Tibial artery (tissue), 4 donors: ENCODE measurements at regions of chr7 and their contacts with region 1.

Region 1: GRCh38 chr7:22822486-22823141 is at the start of gene TOMM7:
- DNase-seq: peak; percentile 83 to 92
- H3K4me3 ChIP-seq: peak within 1 kb of the TSS; percentile 79 to 88
- H3K27ac ChIP-seq: peak within 1 kb of the TSS; percentile 80 to 86
- H3K4me1 ChIP-seq: peaks cover 0 to 36% (median 15%) of the 10 kb centered on the region in 4 donors
- H3K27me3 ChIP-seq: no peaks in the 10 kb centered on the region
- CTCF ChIP-seq: peak; percentile 39 to 63

Region 2: GRCh38 chr7:21869785-21870402 is 952.7 kb before region 1 on chr7:
- intact Hi-C with region 1: no loop called
- DNase-seq: no peak
- H3K4me3 ChIP-seq: no peak overlapping the region
- H3K27ac ChIP-seq: no peak overlapping the region
- H3K4me1 ChIP-seq: no peaks in the 10 kb centered on the region
- H3K27me3 ChIP-seq: no peaks in the 10 kb centered on the region
- CTCF ChIP-seq: no peak

Region 3: DNA sequence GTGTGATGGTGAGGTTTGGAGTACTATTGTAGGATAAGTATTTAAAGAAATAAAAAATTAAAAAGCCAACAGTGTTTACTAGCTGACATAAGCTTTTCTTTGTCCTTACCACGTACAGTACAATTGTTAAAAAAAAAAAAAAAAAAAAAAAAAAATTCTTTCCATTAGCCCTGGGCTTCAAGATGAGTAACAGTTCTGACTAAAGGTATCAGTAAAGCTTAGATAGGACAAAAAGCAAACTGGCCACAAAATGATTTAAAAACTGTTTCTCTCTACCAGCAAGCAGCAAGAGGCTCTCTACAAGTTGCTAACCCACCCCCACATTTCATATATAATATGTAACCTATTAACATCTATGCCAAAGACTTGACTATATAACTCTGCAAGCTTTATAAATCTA is 173.9 kb after region 1 on chr7:
- intact Hi-C with region 1: no loop called
- DNase-seq: no peak
- H3K4me3 ChIP-seq: no peak overlapping the region
- H3K27ac ChIP-seq: no peak overlapping the region
- H3K4me1 ChIP-seq: peaks cover 0 to 29% (median 9%) of the 10 kb centered on the region in 4 donors
- H3K27me3 ChIP-seq: no peaks in the 10 kb centered on the region
- CTCF ChIP-seq: no peak

Region 4: GRCh38 chr7:23013715-23014649 is 191.4 kb after region 1 on chr7 and contains the start of gene HYCC1:
- intact Hi-C with region 1: loop called (anchors 2 kb)
- DNase-seq: peak; percentile 99 to 100
- H3K4me3 ChIP-seq: peak within 1 kb of the TSS; percentile 87 to 88
- H3K27ac ChIP-seq: peak within 1 kb of the TSS; percentile 86 to 89
- H3K4me1 ChIP-seq: peaks cover 0 to 61% (median 14%) of the 10 kb centered on the region in 4 donors
- H3K27me3 ChIP-seq: no peaks in the 10 kb centered on the region
- CTCF ChIP-seq: peak; percentile 74 to 81

Region 5: GRCh38 chr7:23055582-23056178 is 233.1 kb after region 1 on chr7:
- intact Hi-C with region 1: loop called (anchors 5 kb)
- DNase-seq: peak in 1 of 2 donors; percentile 50
- H3K4me3 ChIP-seq: no peak overlapping the region
- H3K27ac ChIP-seq: no peak overlapping the region
- H3K4me1 ChIP-seq: no peaks in the 10 kb centered on the region
- H3K27me3 ChIP-seq: no peaks in the 10 kb centered on the region
- CTCF ChIP-seq: peak; percentile 89 to 92

Region 6: GRCh38 chr7:23298885-23299769 is 476.5 kb after region 1 on chr7 and contains the start of gene MALSU1:
- intact Hi-C with region 1: loop called (anchors 5 kb)
- DNase-seq: peak; percentile 97 to 98
- H3K4me3 ChIP-seq: peak within 1 kb of the TSS; percentile 80 to 91
- H3K27ac ChIP-seq: peak within 1 kb of the TSS; percentile 80 to 81
- H3K4me1 ChIP-seq: peaks cover 0 to 57% (median 35%) of the 10 kb centered on the region in 4 donors
- H3K27me3 ChIP-seq: no peaks in the 10 kb centered on the region
- CTCF ChIP-seq: no peak